ENCODE measurements at regions of chr10 and their contacts with region 1.

Region 1: DNA sequence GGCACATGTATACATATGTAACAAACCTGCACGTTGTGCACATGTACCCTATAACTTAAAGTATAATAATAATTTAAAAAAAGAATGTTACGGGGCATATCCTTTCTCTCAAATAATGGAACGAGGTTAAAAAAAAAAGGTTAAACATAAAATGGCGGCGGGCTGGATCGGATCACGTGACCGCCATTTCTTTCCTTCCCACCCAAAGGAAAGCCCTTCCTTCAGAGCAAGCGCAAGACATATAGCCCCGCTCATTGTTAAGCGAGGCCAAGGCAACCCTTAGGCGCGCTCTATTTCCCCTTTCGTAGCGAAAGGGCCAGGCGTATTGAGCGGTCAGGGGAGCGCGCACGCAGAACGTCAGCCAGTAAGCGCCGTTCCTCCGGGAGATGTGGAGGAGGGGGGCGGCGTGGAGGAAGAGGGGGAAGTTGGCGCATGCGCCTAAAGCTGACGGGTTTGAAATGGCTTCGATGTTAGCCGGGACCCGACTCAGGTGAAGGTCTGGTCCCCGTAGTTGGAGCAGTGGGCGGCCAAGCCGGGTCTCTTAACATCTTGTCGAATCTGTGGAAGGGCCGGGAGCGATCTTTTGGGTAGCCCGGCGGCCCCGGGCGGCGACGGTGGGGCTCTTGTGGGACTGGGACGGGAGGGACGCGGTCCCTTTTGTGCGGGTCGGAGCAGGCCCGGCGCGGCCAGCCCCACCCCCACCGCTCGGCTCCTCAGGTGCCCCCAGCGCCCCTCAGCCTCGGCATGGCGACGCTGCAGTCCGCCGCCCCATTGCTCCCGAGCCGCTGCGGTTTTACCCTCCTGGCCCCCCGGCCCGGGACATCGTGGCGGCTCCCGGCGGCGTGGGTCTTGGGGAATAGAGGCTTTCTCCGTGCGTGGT is at the start of gene CCAR1:
- DNase-seq: peak; percentile 90 to 98 (median 96)

Region 2: GRCh38 chr10:68406815-68407548 is 314.1 kb before region 1 on chr10 and contains the start of gene RUFY2:
- intact Hi-C with region 1: loop called (anchors 5 kb)
- DNase-seq: peak; percentile 54 to 92 (median 83)

Region 3: GRCh38 chr10:68526626-68527307 is 194.3 kb before region 1 on chr10:
- intact Hi-C with region 1: loop called (anchors 5 kb)
- DNase-seq: peak in 1 of 42 donors; percentile 11

Region 4: GRCh38 chr10:68550747-68551411 is 170.2 kb before region 1 on chr10:
- intact Hi-C with region 1: loop called (anchors 10 kb)
- DNase-seq: peak in 34 of 42 donors; percentile 11 to 84 (median 54)

Region 5: GRCh38 chr10:68598978-68599770 is 121.9 kb before region 1 on chr10:
- intact Hi-C with region 1: loop called (anchors 5 kb)
- DNase-seq: peak in 37 of 42 donors; percentile 7 to 65 (median 37)

Region 6: DNA sequence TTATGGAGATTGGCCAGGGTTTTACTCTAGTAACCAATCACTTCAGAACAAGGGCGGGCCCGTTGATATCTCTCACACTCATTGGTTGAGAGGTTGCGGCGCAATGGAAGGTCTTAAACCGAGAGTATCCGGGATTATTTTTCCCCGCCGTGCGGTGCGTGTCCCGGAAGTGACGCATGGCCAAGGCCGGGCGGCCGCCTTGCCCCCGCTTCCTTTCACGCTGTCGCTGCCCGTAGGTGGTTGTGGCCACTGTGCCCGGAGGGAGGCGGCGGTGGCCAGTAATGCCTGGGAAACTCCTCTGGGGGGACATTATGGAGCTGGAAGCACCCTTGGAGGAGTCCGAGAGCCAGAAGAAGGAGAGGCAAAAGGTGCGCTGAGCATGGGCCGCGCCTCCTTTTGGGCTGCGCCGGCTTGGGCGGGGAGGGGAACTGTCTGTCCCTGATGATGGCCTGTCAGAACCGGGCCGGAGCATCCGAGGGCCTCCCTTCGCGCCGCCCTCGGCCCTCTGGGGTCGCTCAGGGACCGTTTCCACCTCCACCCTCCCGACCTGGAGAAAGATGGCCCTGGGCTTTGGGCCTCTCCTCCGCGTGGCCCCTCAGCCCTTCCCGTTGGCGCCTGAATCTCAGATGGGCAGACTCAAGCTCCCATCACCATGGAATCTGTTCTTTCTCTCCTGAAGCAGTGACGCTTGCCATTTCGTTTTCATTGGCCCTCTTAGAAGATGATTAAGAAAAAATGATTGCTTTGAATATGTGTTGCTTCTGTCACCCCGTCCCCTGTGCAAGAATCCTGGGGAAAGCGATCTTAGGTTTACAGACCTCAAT is 180.3 kb after region 1 on chr10 and contains the start of gene DDX50:
- intact Hi-C with region 1: loop called (anchors 5 kb)
- DNase-seq: peak; percentile 96 to 100 (median 99)

Measured in head of caudate nucleus (tissue), 42 donors.